Sigmoid colon (tissue), 7 donors: ENCODE measurements at regions of chr3 and their contacts with region 1.

Region 1: DNA sequence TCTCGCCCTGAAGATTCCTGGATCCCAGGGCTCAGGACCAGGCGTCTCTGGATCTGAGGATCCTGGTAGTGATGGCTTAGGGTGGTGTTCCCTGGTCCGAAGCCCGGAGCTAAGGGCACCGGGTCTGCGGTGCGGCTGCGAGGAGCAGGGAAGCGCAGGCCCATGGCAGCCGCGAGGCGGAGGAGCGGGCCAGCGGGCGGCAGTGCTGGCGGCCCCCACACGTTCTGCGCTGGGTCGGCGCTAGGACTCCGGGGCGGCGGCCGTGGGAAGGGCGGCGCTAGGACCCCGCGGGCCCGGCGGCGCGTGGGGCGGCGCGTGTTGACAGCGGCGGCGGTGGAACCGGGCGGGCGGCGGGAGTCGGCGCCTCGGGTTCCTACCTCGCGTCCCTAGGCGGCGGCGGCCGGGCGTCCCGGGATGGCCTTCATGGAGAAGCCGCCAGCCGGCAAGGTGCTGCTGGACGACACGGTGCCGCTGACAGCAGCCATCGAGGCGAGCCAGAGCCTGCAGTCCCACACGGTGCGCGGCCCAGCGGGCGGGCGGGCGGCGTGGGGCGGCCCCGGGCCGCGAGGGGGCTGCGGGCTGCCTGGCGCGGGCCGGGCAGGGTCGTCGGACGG is at the start of gene PXK:
- DNase-seq: peak; percentile 85
- H3K4me3 ChIP-seq: peak within 1 kb of the TSS; percentile 73 to 93 (median 88)
- H3K27ac ChIP-seq: peak within 1 kb of the TSS; percentile 76 to 84 (median 82)
- H3K4me1 ChIP-seq: peaks cover 0 to 41% (median 35%) of the 10 kb centered on the region in 4 donors
- H3K27me3 ChIP-seq: no peaks in the 10 kb centered on the region
- CTCF ChIP-seq: no peak
- EP300 ChIP-seq: no peak
- POLR2A ChIP-seq: no peak
- total RNA-seq, gene PXK: 30.3 to 58.7 (median 50.5) TPM

Region 2: GRCh38 chr3:58414538-58415197 is 82.0 kb after region 1 on chr3:
- intact Hi-C with region 1: loop called (anchors 1 kb)
- DNase-seq: peak; percentile 72
- H3K4me3 ChIP-seq: no peak overlapping the region
- H3K27ac ChIP-seq: no peak overlapping the region
- H3K4me1 ChIP-seq: peaks cover 0 to 19% (median 13%) of the 10 kb centered on the region in 4 donors
- H3K27me3 ChIP-seq: no peaks in the 10 kb centered on the region
- CTCF ChIP-seq: peak; percentile 76 to 88 (median 84)
- EP300 ChIP-seq: no peak
- POLR2A ChIP-seq: no peak

Region 3: GRCh38 chr3:58491506-58492402 is 159.1 kb after region 1 on chr3 and contains the start of gene KCTD6:
- intact Hi-C with region 1: loop called (anchors 1 kb)
- DNase-seq: peak; percentile 95
- H3K4me3 ChIP-seq: peak within 1 kb of the TSS; percentile 77 to 96 (median 87)
- H3K27ac ChIP-seq: peak within 1 kb of the TSS; percentile 83 to 95 (median 87)
- H3K4me1 ChIP-seq: peaks cover 0 to 57% (median 38%) of the 10 kb centered on the region in 4 donors
- H3K27me3 ChIP-seq: no peaks in the 10 kb centered on the region
- CTCF ChIP-seq: peak in 2 of 4 experiments; percentile 28 to 63
- EP300 ChIP-seq: no peak
- POLR2A ChIP-seq: no peak
- total RNA-seq, gene KCTD6: 11.0 to 25.3 (median 17.7) TPM